ENCODE measurements at regions of chr2 and their contacts with region 1.

Region 1: GRCh38 chr2:142585785-142586184 is 291.7 kb upstream of the KYNU start:
- DNase-seq: no peak
- ATAC-seq: no peak
- H3K4me3 ChIP-seq: no peak overlapping the region
- H3K27ac ChIP-seq: no peak overlapping the region
- H3K4me1 ChIP-seq: no peaks in the 10 kb centered on the region
- H3K27me3 ChIP-seq: no peaks in the 10 kb centered on the region

Region 2: DNA sequence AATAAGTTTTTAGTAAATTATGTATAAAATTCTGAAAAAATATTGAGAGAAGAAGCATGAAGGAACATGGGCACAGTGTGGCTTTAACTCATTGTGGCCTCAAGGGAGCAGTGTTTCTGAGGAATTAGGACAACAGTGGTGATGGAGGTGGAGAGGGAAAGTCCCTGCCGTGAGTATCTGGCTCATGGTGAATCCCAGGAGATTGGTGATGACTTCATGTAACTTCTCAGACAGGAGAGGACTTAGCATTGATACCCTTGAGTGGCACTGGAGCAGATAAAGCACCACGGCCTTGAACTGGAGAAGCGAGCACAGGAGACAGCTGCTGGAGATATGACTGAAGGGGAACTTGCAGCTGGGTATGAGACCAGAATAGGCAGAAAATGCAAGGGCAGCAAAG is 420.0 kb before region 1 on chr2:
- intact Hi-C with region 1: loop called in 1 of 4 experiments (anchors 10 kb)
- DNase-seq: no peak
- ATAC-seq: peak; percentile 65 to 66
- H3K4me3 ChIP-seq: no peak overlapping the region
- H3K27ac ChIP-seq: no peak overlapping the region
- H3K4me1 ChIP-seq: peaks cover 2% of the 10 kb centered on the region
- H3K27me3 ChIP-seq: no peaks in the 10 kb centered on the region

Region 3: GRCh38 chr2:142668420-142668819 is 82.6 kb after region 1 on chr2:
- intact Hi-C with region 1: no loop called
- DNase-seq: no peak
- ATAC-seq: no peak
- H3K4me3 ChIP-seq: no peak overlapping the region
- H3K27ac ChIP-seq: no peak overlapping the region
- H3K4me1 ChIP-seq: no peaks in the 10 kb centered on the region
- H3K27me3 ChIP-seq: no peaks in the 10 kb centered on the region